Activated CD4-positive, alpha-beta T cell treated with anti-CD3 and anti-CD28 coated beads for 36 hours (primary cell): ENCODE measurements at regions of chr9 and their contacts with region 1.

Region 1: DNA sequence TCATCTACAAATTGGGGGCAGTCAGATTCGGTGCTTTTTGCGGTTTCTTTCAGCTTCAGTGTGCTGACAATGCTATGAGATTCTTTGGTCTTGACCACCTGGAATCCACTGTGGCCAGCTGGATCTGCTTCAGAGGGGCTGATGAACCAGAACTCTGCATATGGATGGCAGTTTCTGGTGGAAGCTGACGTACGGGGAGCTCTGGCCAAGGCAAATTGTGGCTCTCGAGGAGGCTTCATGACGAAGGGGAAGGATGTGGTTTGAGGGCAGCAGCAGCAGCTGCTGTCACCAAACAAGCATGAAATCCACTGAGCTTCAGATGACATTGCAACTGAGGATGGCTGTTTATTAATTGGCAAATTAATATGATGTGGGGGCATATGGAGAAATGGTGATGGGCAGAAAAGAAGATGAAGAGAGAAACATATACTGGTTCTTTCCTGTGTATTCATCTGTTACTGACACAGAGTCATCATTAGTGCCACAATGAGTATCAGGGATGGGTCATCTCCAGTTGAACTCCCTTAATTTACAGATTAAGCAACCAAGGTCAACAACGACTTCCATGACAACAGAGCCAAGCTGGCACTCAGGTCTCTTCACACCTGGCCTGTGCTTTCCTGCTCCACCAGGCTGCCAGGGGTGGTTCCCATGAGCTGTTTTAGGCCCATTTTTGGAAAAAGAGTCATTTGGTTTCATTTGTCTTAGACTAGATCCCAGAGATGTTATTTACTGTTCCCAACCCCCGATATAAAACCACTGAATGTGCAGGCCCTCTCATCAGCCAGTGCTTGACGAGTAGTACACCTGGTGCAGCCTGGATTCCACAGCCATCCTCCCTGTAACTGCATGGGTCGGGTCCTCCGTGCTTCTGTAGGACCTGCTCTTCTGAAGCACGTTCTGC is 134.7 kb downstream of the AOPEP start:
- DNase-seq: peak; percentile 80
- ATAC-seq: peak; percentile 90
- H3K4me3 Mint-ChIP-seq: peak overlapping the region; percentile 6
- H3K27ac Mint-ChIP-seq: peak overlapping the region; percentile 66
- H3K4me1 Mint-ChIP-seq: peaks cover 37% of the 10 kb centered on the region
- H3K27me3 Mint-ChIP-seq: peaks cover 3% of the 10 kb centered on the region

Region 2: DNA sequence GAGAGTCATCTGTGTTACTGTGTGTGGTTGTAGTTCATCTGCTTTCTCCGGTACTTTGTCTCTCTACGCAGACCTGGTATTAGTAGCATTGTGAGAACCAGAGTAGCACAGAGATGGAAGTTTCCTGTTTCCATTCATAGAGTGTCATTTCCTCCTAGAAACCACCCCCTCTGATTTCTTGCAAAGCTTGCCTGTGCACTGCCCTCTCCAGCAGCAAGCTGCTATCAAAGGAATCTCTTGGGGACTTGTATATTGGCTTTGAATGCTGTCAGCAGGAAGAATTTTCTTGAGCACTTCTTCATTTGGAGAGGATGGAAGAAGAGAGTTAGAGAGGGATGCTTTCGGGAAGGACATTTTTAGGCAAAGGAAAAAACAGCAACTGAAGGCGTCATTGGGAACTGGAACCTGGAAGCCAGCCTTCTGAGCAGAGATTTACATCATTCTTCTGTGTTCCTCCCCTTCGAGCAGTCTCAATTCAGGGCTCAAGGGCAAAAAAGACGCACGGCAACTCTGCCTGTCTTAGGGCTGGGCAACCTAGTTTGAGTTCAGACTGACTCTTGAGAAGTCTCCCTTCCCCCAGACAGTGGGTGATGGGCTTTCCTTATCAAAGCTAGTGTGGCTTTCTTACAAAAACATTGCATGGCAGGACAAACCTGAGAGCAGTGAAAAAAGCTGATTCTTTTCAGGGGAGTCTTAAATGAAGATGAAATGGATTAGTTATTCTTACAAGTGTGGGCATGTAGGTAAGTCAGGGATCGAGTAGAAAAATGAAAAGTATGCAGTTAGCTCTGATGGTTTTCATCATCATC is 91.5 kb after region 1 on chr9:
- CTCF ChIA-PET with region 1: no interaction called
- POLR2A ChIA-PET with region 1: no interaction called
- intact Hi-C with region 1: loop called in 1 of 2 experiments (anchors 5 kb)
- DNase-seq: peak; percentile 35
- ATAC-seq: peak; percentile 96
- H3K4me3 Mint-ChIP-seq: no peak overlapping the region
- H3K27ac Mint-ChIP-seq: peak overlapping the region; percentile 37
- H3K4me1 Mint-ChIP-seq: peaks cover 40% of the 10 kb centered on the region
- H3K27me3 Mint-ChIP-seq: no peaks in the 10 kb centered on the region